ENCODE measurements at regions of chr13 and their contacts with region 1.

Region 1: DNA sequence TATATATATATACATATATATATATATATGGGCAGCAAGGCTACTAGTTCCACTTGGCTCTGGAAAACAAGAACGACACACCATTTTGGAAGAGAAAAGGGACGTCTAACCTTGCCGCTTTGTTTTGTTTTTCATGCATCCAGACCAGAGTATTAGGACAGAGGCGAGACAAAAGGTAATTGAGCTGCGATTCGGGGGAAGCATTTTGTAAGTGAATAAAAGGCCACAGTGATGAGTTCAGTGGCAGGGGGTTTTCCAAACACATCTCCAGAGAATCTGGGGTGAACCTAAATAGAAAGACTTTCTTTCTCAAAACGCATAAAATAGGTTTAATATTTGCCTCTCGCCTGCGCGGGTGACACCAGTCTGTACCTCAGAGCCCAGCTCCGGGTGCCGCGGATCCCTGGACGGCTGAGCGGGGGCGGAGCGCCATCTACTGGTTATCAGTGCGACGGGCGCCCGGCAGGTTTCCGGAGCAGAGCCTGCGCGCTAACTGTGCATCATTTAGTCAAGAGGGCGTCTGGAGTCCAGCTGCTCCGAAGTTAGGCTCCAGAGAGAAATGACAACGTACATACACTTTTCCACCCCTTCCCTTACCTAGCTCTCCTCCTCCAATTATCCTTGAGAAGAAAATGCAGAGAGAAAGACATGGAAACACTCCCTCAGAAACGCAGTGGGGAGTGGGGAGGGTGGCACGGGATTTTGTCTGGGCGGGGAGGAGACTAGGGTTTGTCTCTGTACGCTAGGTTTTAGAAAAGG is 262.3 kb downstream of the TBC1D4 start:
- DNase-seq: peak; percentile 71 to 92 (median 85)
- ATAC-seq: peak; percentile 92 to 99 (median 96)
- H3K4me3 ChIP-seq: peak overlapping the region in 9 of 12 donors; percentile 19 to 44 (median 30)
- H3K27ac ChIP-seq: no peak overlapping the region
- H3K4me1 ChIP-seq: peaks cover 0 to 10% (median 0%) of the 10 kb centered on the region in 12 donors
- H3K27me3 ChIP-seq: peaks cover 0 to 4% (median 0%) of the 10 kb centered on the region in 9 donors
- CTCF ChIP-seq: peak; percentile 92 to 99 (median 98)
- POLR2A ChIP-seq: no peak

Region 2: GRCh38 chr13:73754727-73755292 is 1464.8 kb before region 1 on chr13:
- intact Hi-C with region 1: loop called in 9 of 10 experiments (anchors 5 to 10 kb)
- DNase-seq: peak in 1 of 5 donors; percentile 34
- ATAC-seq: peak in 3 of 4 donors; percentile 64 to 67 (median 65)
- H3K4me3 ChIP-seq: no peak overlapping the region
- H3K27ac ChIP-seq: no peak overlapping the region
- H3K4me1 ChIP-seq: peaks cover 0 to 8% (median 0%) of the 10 kb centered on the region in 12 donors
- H3K27me3 ChIP-seq: no peaks in the 10 kb centered on the region
- CTCF ChIP-seq: peak; percentile 56 to 83 (median 70)
- POLR2A ChIP-seq: no peak

Region 3: GRCh38 chr13:73820688-73821087 is 1399.0 kb before region 1 on chr13:
- intact Hi-C with region 1: loop called in 1 of 10 experiments (anchors 10 kb)
- DNase-seq: no peak
- ATAC-seq: no peak
- H3K4me3 ChIP-seq: no peak overlapping the region
- H3K27ac ChIP-seq: no peak overlapping the region
- H3K4me1 ChIP-seq: peaks cover 0 to 7% (median 0%) of the 10 kb centered on the region in 12 donors
- H3K27me3 ChIP-seq: no peaks in the 10 kb centered on the region
- CTCF ChIP-seq: no peak
- POLR2A ChIP-seq: no peak

Region 4: DNA sequence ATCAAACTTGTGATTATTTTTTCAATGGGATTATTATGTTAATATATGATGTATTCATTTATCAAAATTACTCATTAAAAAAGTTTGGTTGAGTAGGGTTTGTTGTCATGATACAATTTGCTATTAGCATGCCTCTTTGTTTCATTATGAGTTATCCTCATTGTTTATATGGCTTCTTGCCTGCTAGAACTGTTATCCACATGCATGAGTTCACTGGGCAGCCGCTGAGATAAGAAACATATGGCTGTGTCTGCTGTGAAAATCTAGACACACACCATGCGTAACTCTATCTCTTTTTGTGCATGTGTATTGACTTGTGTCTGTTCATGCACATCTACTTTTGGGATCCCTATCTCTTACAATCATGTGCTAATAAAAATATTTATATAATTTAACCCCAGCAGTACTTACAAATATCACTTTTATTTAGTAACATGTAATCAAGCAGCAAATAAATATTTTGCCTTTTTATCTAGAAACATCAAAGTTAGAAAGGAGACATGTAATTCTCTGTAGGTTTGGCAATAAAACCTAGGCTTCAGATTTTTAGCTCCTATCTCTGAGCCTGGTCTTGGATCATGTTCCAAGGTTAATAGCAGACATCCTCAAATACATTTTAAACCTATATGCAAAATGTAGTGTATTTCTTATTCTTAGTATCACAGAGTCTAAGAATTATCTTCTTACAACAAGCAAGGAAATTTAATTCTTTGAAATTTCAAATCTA is 1074.2 kb before region 1 on chr13:
- intact Hi-C with region 1: loop called in 1 of 10 experiments (anchors 10 kb)
- DNase-seq: no peak
- ATAC-seq: peak in 2 of 4 donors; percentile 47 to 60
- H3K4me3 ChIP-seq: no peak overlapping the region
- H3K27ac ChIP-seq: no peak overlapping the region
- H3K4me1 ChIP-seq: peaks cover 0 to 16% (median 8%) of the 10 kb centered on the region in 12 donors
- H3K27me3 ChIP-seq: no peaks in the 10 kb centered on the region
- CTCF ChIP-seq: no peak
- POLR2A ChIP-seq: no peak

Region 5: DNA sequence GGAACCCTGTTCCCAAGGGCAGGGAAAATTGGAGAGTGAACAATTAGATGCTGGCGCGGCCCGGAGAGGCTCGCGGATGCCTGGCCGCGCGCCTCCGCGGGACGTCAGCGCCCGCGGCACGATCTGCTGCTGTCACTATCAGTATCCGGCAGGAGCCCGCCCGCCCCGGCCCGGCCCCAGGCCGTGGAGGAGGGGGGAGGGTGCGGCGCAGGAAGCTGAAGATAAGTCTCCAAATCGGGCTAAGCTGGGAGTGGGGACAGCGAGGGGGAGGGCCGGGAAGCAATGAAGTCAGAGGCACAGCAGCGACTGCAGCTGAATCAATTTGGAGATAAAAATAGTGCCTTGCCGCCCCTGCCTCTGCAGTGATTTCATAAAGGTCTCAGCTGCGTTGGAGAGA is 643.9 kb before region 1 on chr13:
- intact Hi-C with region 1: loop called in 3 of 10 experiments (anchors 5 to 10 kb)
- DNase-seq: peak; percentile 90 to 94 (median 92)
- ATAC-seq: peak; percentile 96 to 99 (median 99)
- H3K4me3 ChIP-seq: peak overlapping the region in 11 of 12 donors; percentile 31 to 51 (median 45)
- H3K27ac ChIP-seq: peak overlapping the region in 9 of 12 donors; percentile 6 to 86 (median 73)
- H3K4me1 ChIP-seq: peaks cover 4 to 29% (median 17%) of the 10 kb centered on the region in 12 donors
- H3K27me3 ChIP-seq: no peaks in the 10 kb centered on the region
- CTCF ChIP-seq: no peak
- POLR2A ChIP-seq: peak in 1 of 2 donors; percentile 7

Region 6: GRCh38 chr13:75425216-75426009 is 205.8 kb after region 1 on chr13:
- intact Hi-C with region 1: no loop called
- DNase-seq: no peak
- ATAC-seq: no peak
- H3K4me3 ChIP-seq: no peak overlapping the region
- H3K27ac ChIP-seq: no peak overlapping the region
- H3K4me1 ChIP-seq: peaks cover 0 to 54% (median 14%) of the 10 kb centered on the region in 12 donors
- H3K27me3 ChIP-seq: no peaks in the 10 kb centered on the region
- CTCF ChIP-seq: no peak
- POLR2A ChIP-seq: no peak